ENCODE measurements at regions of chr3 and their contacts with region 1.

Region 1: DNA sequence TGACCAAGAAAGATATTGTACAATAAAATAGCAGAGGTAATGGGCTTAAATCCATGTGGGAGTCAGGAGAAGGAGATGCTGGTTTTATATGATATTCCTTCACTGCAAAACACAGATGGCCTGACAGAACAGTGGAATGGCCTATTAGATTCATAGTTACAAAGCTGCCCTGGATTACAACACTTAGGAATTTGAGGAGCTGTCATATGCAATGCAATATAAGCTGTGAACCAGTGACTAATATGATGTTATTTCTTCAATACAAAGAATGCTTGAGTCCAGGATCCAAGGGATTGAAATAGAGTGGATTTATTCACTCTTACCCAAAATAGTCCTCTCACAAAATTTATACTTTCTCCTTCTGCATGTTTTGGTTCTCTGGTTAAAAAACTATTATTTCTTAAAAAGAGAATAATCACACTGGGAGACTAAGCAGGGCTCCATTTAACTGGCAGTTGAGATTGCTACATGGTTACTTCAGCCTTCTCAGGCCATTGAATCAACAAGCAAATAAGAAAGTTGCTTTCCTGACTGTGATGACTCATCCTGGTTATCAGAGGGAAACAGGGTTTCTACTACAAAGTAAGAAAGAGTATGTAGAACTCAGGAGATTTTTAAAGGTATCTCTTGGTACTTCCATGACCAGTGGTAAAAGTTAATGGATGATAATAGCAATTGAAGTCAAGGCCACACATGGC is 79.8 kb upstream of the ZPLD1 start:
- DNase-seq: peak; percentile 76
- H3K4me3 ChIP-seq: no peak overlapping the region
- H3K27ac ChIP-seq: peak overlapping the region; percentile 72
- H3K4me1 ChIP-seq: peaks cover 27% of the 10 kb centered on the region
- H3K27me3 ChIP-seq: no peaks in the 10 kb centered on the region
- CTCF ChIP-seq: no peak

Region 2: DNA sequence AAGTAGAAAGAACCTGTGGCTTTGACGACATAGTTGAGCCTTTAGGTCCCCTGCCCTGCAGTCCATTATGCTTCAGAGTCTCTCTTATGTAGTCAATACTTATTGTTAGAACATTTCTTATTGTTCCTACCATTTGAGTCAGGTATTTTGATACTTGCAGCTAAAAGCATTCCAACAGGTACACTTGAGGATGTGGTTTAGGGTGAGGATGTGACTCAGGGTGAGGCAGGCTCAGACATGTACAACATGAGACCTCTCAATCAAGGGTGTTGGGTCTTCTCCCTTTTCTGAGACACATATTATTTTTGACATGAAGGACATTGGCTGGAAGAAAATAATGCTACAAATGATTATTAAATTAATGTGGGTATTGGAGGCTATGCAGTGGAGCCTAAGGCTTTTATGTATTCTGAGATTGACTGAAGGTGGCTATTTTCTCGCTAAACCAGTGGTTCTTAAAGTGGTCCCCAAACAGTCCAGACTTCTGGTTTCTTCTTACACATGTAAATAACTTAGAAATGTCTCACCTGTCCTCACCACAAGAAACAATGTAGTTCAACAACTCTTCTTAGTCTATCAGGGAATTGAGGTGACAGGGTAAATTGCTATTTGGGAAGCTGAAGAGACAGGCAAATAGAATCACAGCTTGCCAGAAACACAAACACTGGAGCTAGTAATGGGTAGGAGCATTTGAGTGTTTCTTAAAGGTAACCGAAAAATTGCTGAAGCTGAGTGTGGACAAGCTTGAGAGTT is 55.7 kb before region 1 on chr3:
- CTCF ChIA-PET with region 1: no interaction called
- dilution Hi-C with region 1: no loop called
- in situ Hi-C with region 1: no loop called
- intact Hi-C with region 1: loop called (anchors 5 kb)
- DNase-seq: peak; percentile 93
- H3K4me3 ChIP-seq: no peak overlapping the region
- H3K27ac ChIP-seq: peak overlapping the region; percentile 89
- H3K4me1 ChIP-seq: peaks cover 36% of the 10 kb centered on the region
- H3K27me3 ChIP-seq: no peaks in the 10 kb centered on the region
- CTCF ChIP-seq: no peak

Region 3: GRCh38 chr3:102400766-102401165 is 45.8 kb after region 1 on chr3:
- CTCF ChIA-PET with region 1: interaction called, 3 read pairs
- dilution Hi-C with region 1: no loop called
- in situ Hi-C with region 1: no loop called
- intact Hi-C with region 1: loop called (anchors 2 kb)
- DNase-seq: peak; percentile 88
- H3K4me3 ChIP-seq: no peak overlapping the region
- H3K27ac ChIP-seq: peak overlapping the region; percentile 79
- H3K4me1 ChIP-seq: peaks cover 21% of the 10 kb centered on the region
- H3K27me3 ChIP-seq: no peaks in the 10 kb centered on the region
- CTCF ChIP-seq: no peak

Region 4: GRCh38 chr3:102741108-102741507 is 386.1 kb after region 1 on chr3:
- CTCF ChIA-PET with region 1: no interaction called
- dilution Hi-C with region 1: no loop called
- in situ Hi-C with region 1: no loop called
- intact Hi-C with region 1: no loop called
- DNase-seq: peak; percentile 0
- H3K4me3 ChIP-seq: no peak overlapping the region
- H3K27ac ChIP-seq: no peak overlapping the region
- H3K4me1 ChIP-seq: no peaks in the 10 kb centered on the region
- H3K27me3 ChIP-seq: no peaks in the 10 kb centered on the region
- CTCF ChIP-seq: peak; percentile 18 to 53

Measured in mammary epithelial cell (primary cell).